Posterior cingulate gyrus (tissue), 11 donors: ENCODE measurements at regions of chr11 and their contacts with region 1.

Region 1: GRCh38 chr11:49533204-49533603 is 324.8 kb upstream of the FOLH1 start:
- DNase-seq: no peak

Region 2: GRCh38 chr11:49230511-49230910 is 302.7 kb before region 1 on chr11:
- intact Hi-C with region 1: loop called (anchors 10 kb)
- DNase-seq: no peak